Activated CD4-positive, alpha-beta memory T cell treated with anti-CD3 and anti-CD28 coated beads, Interleukin-2, amount 10 ng/mL, durations not matched to agents 7 days and 5 days (primary cell): ENCODE measurements at regions of chr9 and their contacts with region 1.

Region 1: GRCh38 chr9:272251-273213 is 57.9 kb downstream of the DOCK8 start:
- DNase-seq: peak; percentile 83
- H3K4me3 Mint-ChIP-seq: peak overlapping the region; percentile 83
- H3K27ac Mint-ChIP-seq: peak overlapping the region; percentile 97
- H3K4me1 Mint-ChIP-seq: peaks cover 58% of the 10 kb centered on the region
- H3K27me3 Mint-ChIP-seq: no peaks in the 10 kb centered on the region

Region 2: DNA sequence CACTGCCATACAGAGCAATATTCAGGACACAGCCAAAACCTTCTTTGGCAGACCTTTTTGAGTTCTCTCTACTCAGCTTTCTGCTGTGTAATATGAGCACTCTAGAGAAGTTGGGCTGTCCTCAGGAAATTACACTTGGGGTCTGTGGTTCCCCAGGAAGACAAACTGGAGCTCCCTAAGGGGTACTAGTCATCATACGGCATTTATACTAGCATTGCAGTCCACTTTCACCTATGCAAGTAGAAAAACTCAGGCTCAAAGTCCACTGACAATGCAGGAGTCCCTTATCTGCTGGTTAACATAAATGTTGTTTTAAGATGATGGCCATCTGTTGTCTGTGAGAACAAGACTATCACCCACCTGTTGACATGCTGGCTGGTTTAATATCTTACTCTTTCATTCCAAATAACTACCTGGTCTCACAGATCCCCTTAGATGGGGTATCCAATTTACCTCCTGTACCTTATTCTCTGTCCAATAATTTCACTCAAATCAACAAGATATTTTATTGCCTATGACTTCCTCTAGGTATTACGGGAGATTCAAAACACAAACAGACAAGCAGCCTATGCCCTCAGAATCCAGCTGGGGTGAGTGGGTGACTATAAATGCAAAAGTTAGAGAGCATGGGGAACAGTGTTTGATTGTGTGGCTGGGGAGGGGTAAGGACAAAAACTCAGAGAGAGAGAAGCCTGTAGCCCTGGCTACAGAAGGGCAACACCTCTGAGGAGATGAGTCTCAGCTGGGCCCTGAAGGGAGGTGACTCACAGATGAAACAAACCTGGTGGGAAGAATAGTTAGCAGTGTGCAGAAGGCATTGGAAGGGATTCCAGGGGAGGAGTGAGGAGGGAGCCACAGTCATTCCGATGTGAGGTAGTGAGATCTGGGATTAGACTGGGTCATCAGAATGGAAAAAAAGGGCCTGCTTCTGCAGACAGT is 47.7 kb before region 1 on chr9:
- CTCF ChIA-PET with region 1: interaction called, 12 read pairs
- POLR2A ChIA-PET with region 1: interaction called, 197 read pairs
- DNase-seq: peak; percentile 34
- H3K4me3 Mint-ChIP-seq: peak overlapping the region; percentile 49
- H3K27ac Mint-ChIP-seq: no peak overlapping the region
- H3K4me1 Mint-ChIP-seq: peaks cover 49% of the 10 kb centered on the region
- H3K27me3 Mint-ChIP-seq: no peaks in the 10 kb centered on the region

Region 3: DNA sequence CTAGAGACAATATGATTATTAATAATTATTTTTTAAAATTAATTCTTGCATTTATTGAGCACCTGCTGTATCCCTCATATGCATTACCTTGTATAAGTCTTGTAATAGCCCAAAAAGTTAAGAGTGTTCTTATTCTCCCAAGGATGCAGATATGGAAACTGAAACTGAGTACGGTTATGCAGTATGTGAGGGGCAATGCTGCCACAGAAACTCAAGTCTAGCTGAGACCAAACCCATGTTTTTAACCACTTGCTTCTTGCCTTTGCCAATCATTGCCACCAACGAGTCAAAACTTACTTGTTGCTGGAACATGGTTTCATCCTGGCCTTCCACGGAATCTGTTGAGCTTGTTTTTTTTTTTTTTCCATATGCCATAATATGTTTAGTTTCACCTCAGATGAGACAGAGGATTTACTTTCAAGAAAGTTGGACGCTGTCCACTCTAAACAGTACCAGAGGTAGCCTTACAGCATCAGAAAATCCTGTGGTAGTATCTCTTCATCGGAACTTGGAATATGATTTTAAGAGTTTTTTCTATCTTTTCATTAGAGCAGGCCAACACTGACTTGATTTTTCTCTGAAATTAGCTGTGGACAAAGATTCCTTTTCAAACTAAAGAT is 30.0 kb before region 1 on chr9:
- CTCF ChIA-PET with region 1: interaction called, 5 read pairs
- POLR2A ChIA-PET with region 1: interaction called, 57 read pairs
- DNase-seq: peak; percentile 42
- H3K4me3 Mint-ChIP-seq: peak overlapping the region; percentile 61
- H3K27ac Mint-ChIP-seq: peak overlapping the region; percentile 79
- H3K4me1 Mint-ChIP-seq: peaks cover 71% of the 10 kb centered on the region
- H3K27me3 Mint-ChIP-seq: no peaks in the 10 kb centered on the region

Region 4: GRCh38 chr9:286071-286740 is 13.7 kb after region 1 on chr9:
- CTCF ChIA-PET with region 1: interaction called, 13 read pairs
- POLR2A ChIA-PET with region 1: interaction called, 44 read pairs
- DNase-seq: no peak
- H3K4me3 Mint-ChIP-seq: no peak overlapping the region
- H3K27ac Mint-ChIP-seq: no peak overlapping the region
- H3K4me1 Mint-ChIP-seq: peaks cover 66% of the 10 kb centered on the region
- H3K27me3 Mint-ChIP-seq: no peaks in the 10 kb centered on the region